ENCODE measurements at regions of chr5 and their contacts with region 1.

Region 1: DNA sequence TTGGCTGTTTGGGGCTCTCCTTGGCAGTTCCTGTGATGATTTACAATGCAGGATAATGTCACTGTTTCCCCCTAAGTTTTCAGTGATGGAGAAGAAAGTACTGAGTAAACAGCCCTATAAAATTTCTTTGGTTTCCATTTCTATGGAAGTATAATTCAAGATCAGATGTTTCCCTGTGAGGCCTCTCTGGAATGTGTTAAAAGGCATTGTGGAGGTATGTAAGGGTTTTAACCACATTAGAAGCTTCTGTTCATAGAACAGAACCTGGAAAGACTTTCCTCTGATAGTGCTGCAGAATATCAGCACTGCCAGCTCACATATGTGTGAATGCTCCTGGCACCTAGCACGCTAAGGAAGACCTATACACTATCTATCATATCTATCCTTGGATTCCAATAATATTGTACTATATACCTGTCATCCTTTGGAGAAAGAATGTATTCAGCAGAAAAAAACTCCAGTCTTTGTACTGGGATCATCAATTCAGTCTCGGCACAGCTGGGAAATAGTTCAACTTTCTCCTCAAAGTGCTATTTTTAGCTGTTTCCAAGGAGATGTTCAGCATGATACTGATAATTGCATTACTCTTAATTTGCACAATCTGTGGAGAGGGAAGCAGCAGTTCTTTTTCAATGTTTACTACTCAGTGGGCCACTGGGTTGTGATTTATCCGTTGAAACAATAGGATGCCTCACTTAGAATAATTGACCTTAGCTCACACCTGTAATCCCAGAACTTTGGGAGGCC is 21.9 kb downstream of the TTC1 start:
- DNase-seq: no peak

Region 2: GRCh38 chr5:159286420-159287035 is 744.3 kb before region 1 on chr5:
- intact Hi-C with region 1: no loop called
- DNase-seq: no peak

Region 3: GRCh38 chr5:160119142-160119904 is 88.5 kb after region 1 on chr5 and contains the start of gene PWWP2A:
- intact Hi-C with region 1: loop called (anchors 5 kb)
- DNase-seq: peak; percentile 99
- total RNA-seq, gene PWWP2A: 11.7 TPM

Measured in cardiac septum (tissue), 1 donor.